Left ventricle myocardium superior (tissue), 1 donor: ENCODE measurements at regions of chr9 and their contacts with region 1.

Region 1: DNA sequence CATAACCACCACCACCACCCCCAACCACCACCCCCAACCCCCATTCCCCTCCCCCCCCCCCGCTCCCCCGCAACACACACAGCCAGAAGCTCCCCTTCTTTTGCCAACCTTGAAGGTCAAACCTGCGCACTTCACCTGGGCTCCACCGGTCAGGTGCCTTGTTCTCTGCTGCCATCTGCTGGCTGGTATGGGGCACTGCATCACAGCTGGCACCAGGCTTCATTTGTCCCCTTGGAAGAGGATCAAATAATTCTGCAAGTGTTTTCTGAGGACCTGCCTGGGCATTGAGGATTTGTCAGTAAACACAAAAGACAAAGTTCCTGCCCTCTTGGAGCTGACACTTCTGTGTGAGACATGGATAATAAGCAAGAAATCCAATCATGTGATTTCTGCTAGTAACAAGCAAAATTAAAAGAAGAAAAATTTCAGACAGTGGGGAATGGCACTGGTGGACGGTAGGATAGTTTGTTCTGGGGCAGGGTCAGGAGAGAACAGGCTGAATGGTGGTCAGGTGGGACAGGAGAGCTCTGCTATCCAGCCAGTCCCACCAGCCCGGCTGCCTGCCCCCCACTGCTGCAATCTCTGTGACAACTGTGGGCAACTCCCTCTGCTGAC is 55.6 kb upstream of the LMX1B start:
- DNase-seq: peak; percentile 71
- ATAC-seq: peak; percentile 81

Region 2: DNA sequence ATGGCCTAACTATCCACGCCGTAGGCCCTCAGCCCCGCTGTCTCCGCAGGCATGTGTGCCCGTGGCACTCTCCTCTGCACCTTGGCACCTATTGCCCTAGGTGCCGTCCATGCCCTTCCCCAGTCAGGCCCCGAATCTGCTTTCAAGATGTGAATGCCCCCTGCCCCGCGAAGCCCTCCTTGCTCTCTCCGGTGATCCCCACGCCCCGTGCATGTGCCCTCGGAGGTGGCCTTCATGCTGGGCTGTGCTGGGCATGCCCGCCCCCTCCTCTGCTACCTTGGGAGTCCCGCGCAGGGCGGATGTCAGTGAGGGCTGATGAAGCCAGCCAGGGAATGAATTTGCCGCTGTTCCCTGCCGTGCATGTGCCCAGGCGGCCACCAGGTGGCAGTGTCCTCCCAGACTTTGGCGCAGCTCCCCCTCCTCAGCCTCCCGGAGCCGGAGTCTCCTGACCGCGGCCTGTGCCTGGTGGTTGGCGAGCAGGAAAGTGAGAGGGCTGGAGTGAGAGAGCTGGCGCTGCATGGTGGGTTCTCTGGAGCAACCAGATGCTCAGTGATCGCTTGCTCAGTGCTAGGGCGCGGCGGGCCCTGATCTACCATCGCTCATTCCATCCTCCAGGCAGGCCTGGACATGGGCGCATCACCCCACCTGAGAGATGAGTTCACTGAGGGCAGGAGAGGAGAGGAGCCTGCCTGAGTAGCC is 57.3 kb before region 1 on chr9:
- intact Hi-C with region 1: loop called (anchors 5 kb)
- DNase-seq: peak; percentile 87
- ATAC-seq: peak; percentile 82

Region 3: DNA sequence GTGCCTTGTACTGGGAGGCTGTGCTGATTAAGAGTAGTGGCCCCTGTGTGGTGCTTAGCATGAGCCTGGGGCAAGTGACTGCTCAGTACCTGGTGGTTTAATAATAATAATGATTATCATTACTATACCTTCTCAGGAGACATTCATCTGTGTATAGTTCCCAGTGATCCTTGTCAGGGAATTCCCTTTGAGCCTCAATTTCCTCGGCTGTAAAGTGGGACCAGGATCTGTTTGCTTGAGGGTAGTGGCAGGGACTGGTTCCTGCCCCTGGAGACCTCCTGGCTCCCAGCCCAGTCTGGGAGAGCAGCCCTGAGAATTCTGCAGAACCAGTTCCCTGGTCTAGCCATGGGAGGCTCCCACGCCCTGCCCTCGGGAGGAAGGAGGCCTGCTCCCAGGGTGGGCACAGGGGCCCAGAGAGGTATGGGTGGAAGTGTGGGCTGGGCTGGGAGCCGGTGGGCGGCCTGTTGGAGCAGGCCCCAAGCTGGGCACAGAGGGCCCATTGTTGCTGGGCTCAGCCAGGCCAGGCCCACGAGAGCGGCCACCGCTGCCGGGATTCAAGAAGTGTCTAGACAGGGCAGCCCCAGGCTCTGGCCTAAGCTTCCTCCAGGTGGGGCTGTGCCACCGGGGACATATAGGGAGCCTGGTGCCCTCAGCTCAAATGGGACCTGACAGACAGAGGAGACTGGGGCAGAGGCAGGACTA is 104.2 kb after region 1 on chr9:
- intact Hi-C with region 1: no loop called
- DNase-seq: peak; percentile 64
- ATAC-seq: peak; percentile 25